Adrenal gland (tissue), 19 donors: ENCODE measurements at regions of chr15 and their contacts with region 1.

Region 1: GRCh38 chr15:64046347-64047153 is at the start of gene DAPK2:
- DNase-seq: peak; percentile 59 to 79 (median 70)
- H3K4me3 ChIP-seq: peak within 1 kb of the TSS in 2 of 4 donors; percentile 32 to 91
- H3K27ac ChIP-seq: peak within 1 kb of the TSS in 1 of 5 donors; percentile 70
- H3K4me1 ChIP-seq: peaks cover 0 to 3% of the 10 kb centered on the region in 2 donors
- H3K27me3 ChIP-seq: no peaks in the 10 kb centered on the region
- CTCF ChIP-seq: peak; percentile 22 to 82 (median 60)
- POLR2A ChIP-seq: peak in 1 of 2 donors; percentile 22
- total RNA-seq, gene DAPK2: 1.2 to 8.4 (median 5.9) TPM

Region 2: GRCh38 chr15:63759752-63760151 is 286.8 kb before region 1 on chr15:
- intact Hi-C with region 1: loop called (anchors 5 to 10 kb)
- DNase-seq: no peak
- H3K4me3 ChIP-seq: no peak overlapping the region
- H3K27ac ChIP-seq: no peak overlapping the region
- H3K4me1 ChIP-seq: peaks cover 0 to 25% of the 10 kb centered on the region in 2 donors
- H3K27me3 ChIP-seq: no peaks in the 10 kb centered on the region
- CTCF ChIP-seq: no peak
- POLR2A ChIP-seq: no peak

Region 3: DNA sequence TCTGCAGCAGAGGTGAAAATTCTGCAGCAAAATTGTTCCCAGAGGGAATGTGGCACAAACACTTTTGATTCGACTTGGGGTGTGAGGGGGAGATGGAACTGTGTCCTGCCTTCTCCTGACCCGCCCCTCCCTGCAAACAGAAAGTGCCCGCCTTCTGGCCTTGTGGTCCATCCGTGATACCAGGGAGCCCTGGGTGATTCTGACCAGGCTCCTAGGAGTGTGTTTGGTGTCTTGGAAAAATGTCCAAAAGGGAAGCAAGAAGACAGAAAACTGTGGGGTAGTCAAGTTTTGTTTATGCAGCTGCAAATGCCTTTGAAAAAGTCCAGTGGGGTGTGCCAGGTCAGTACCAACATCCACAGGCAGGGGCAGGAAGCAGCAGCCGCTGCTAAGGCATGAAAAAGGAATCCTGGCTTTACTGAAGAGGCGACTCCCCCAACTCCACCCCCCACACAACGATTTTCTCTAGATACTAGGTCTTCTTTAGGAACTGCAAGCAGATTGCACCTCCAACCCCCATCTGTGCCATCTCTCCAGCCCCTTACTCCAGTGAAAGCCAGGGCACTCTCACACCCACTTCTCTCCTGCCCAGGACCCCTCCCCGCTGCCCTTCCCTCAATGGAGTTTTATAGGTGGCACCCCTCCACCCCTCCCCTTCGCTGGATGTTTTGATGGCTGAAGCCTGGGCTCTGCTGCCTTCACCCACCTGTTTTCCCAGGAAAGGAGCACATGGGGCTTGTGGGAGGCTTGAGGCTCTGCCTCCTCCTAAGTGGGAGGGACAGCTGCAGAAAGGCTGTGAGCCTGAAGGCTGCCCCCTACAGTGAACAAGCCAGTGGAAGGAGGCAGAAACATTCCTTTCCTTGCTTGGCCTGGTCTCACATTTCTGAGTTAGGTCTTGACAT is 130.4 kb before region 1 on chr15:
- intact Hi-C with region 1: loop called in 1 of 2 experiments (anchors 10 kb)
- DNase-seq: no peak
- H3K4me3 ChIP-seq: no peak overlapping the region
- H3K27ac ChIP-seq: peak overlapping the region in 1 of 5 donors; percentile 29
- H3K4me1 ChIP-seq: no peaks in the 10 kb centered on the region
- H3K27me3 ChIP-seq: no peaks in the 10 kb centered on the region
- CTCF ChIP-seq: peak in 4 of 6 experiments; percentile 16 to 41 (median 34)
- POLR2A ChIP-seq: no peak

Region 4: DNA sequence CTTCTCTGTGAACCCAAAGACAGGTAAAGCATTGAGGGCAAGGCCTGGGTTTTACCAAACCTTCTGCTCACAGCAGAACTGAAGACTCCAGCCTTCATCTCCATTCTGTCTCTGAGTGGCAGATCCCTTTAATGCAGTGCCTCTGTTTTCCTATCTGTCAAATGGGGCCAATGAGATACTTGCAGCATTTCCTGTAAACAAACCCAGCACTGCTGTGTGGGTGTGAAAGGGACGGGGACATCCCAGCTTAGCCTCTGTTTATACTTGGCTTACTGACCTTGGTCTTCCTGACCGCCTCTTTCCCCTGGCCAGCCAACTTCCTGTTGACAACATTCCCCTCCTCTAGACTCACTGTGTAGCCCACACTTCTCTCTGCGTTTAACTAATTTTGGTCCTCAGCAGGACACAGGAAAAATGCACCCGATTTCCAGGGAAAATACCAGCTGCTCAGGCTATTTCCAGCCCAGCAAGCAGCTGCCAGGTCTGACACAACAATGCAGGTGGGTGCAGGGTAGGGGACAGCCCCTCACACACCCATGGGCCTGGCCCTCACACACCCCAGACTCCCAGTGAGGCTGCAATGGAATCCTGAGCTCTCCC is 106.9 kb before region 1 on chr15:
- intact Hi-C with region 1: loop called in 1 of 2 experiments (anchors 5 kb)
- DNase-seq: peak; percentile 28 to 84 (median 65)
- H3K4me3 ChIP-seq: no peak overlapping the region
- H3K27ac ChIP-seq: peak overlapping the region in 2 of 5 donors; percentile 64 to 82
- H3K4me1 ChIP-seq: peaks cover 21 to 30% of the 10 kb centered on the region in 2 donors
- H3K27me3 ChIP-seq: no peaks in the 10 kb centered on the region
- CTCF ChIP-seq: no peak
- POLR2A ChIP-seq: no peak

Region 5: DNA sequence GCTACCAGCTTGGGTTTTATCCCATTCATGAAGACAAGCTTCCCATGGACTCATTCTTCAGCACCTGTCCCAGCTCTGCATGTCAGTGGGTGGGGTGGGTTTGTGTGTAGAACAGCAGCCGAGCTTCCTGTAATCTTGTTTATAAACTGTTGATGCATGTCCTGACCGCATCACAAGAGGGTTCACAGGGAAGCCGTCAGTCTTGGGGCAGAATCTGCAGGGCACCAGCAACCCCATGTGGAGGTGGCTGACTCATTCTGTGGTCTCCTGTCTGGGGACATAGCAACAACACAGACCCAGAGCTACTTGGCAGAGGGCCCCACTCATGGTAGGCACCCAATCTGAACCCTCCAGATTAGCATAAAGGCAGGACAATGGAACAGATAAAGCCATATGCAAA is 35.8 kb before region 1 on chr15:
- intact Hi-C with region 1: no loop called
- DNase-seq: peak in 5 of 7 donors; percentile 42 to 64 (median 50)
- H3K4me3 ChIP-seq: no peak overlapping the region
- H3K27ac ChIP-seq: no peak overlapping the region
- H3K4me1 ChIP-seq: peaks cover 8 to 17% of the 10 kb centered on the region in 2 donors
- H3K27me3 ChIP-seq: no peaks in the 10 kb centered on the region
- CTCF ChIP-seq: no peak
- POLR2A ChIP-seq: no peak